B cell (primary cell): ENCODE measurements at regions of chr3 and their contacts with region 1.

Region 1: GRCh38 chr3:123258811-123259420 is 57.2 kb downstream of the SEC22A start:
- DNase-seq: peak; percentile 51
- ATAC-seq: peak; percentile 49
- H3K4me3 ChIP-seq: no peak overlapping the region
- H3K4me3 Mint-ChIP-seq: no peak overlapping the region
- H3K27ac ChIP-seq: no peak overlapping the region
- H3K27ac Mint-ChIP-seq: no peak overlapping the region
- H3K4me1 ChIP-seq: no peaks in the 10 kb centered on the region
- H3K4me1 Mint-ChIP-seq: peaks cover 3% of the 10 kb centered on the region
- H3K27me3 ChIP-seq: no peaks in the 10 kb centered on the region
- H3K27me3 Mint-ChIP-seq: no peaks in the 10 kb centered on the region
- CTCF ChIP-seq: peak; percentile 57

Region 2: GRCh38 chr3:122754929-122755328 is 504.0 kb before region 1 on chr3:
- CTCF ChIA-PET with region 1: no interaction called
- POLR2A ChIA-PET with region 1: no interaction called
- intact Hi-C with region 1: loop called (anchors 5 kb)
- DNase-seq: peak; percentile 69
- ATAC-seq: peak; percentile 76
- H3K4me3 ChIP-seq: no peak overlapping the region
- H3K4me3 Mint-ChIP-seq: no peak overlapping the region
- H3K27ac ChIP-seq: no peak overlapping the region
- H3K27ac Mint-ChIP-seq: no peak overlapping the region
- H3K4me1 ChIP-seq: no peaks in the 10 kb centered on the region
- H3K4me1 Mint-ChIP-seq: no peaks in the 10 kb centered on the region
- H3K27me3 ChIP-seq: no peaks in the 10 kb centered on the region
- H3K27me3 Mint-ChIP-seq: no peaks in the 10 kb centered on the region
- CTCF ChIP-seq: peak; percentile 76

Region 3: DNA sequence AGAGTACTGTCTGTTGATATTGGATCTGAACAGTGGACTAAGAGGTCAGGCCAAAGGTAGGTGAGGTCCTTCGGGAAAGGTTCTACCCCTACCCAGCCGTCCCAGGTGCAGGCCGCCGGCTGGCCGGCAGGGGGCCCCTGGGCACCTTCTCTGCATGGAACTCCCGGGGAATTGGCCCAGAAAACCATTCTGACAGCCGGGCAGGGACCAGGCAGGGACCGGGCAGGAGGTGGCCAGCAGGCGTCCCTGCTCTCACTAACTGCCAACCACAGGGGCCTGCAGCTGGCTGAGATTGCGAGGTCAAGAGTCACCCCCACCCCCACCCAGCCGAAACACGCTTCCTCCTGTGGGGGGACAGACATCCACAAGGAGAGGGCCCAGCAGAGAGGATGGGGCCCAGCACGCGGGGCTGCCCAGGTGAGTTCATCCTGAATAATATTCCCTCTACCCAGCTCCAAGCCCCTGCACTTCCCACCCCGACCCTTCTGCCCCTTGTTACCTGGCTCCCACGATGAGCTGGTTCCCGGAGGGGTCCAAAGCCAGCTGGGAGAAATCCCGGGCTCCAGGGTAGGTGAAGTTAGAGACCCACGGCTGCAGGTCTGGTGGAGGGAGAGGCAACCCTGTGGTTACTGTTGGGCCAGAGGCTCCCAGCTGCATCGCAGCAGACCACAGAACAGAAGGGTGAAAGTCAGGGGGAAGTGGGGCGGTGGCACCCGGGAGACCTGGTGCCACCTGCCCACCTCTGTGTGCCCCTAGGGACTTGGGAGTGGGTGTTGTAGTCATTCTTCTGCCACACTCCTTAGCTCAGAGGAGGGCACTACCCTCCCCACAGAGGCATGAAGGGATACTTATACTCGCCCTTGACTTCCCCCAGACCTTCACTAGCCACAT is 315.7 kb before region 1 on chr3:
- CTCF ChIA-PET with region 1: no interaction called
- POLR2A ChIA-PET with region 1: no interaction called
- intact Hi-C with region 1: loop called (anchors 2 kb)
- DNase-seq: peak; percentile 35
- ATAC-seq: peak; percentile 49
- H3K4me3 ChIP-seq: no peak overlapping the region
- H3K4me3 Mint-ChIP-seq: no peak overlapping the region
- H3K27ac ChIP-seq: no peak overlapping the region
- H3K27ac Mint-ChIP-seq: no peak overlapping the region
- H3K4me1 ChIP-seq: peaks cover 15 to 21% of the 10 kb centered on the region in 2 donors
- H3K4me1 Mint-ChIP-seq: peaks cover 16% of the 10 kb centered on the region
- H3K27me3 ChIP-seq: peaks cover 0 to 5% (median 1%) of the 10 kb centered on the region in 4 experiments
- H3K27me3 Mint-ChIP-seq: no peaks in the 10 kb centered on the region
- CTCF ChIP-seq: peak; percentile 74